Activated B cell treated with CpG ODN at 0.5 μM for 24 hours (primary cell): ENCODE measurements at regions of chr4 and their contacts with region 1.

Region 1: DNA sequence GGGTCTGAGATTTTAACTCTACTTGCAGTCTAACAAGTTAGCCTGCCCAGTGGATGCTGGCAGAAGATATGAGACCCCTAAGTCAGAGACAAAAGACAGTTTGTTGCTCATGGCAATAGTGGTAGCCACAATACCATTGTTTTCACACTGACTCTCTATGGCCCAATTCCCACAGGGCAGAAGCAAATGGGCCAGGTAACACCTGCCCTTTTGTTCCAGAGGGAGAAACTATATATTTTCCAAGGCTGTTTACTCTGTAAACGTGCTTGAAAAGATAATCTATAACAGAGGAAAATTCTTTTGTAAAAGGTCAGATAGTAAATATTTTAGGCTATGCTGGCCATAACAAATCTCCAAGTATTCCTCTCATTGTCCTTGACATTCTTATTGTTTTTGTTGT is 57.2 kb upstream of the NPNT start:
- DNase-seq: no peak
- ATAC-seq: no peak
- H3K4me3 Mint-ChIP-seq: no peak overlapping the region
- H3K27ac Mint-ChIP-seq: no peak overlapping the region
- H3K4me1 Mint-ChIP-seq: no peaks in the 10 kb centered on the region
- H3K27me3 Mint-ChIP-seq: no peaks in the 10 kb centered on the region
- CTCF ChIP-seq: no peak

Region 2: GRCh38 chr4:104930298-104930697 is 907.8 kb before region 1 on chr4:
- CTCF ChIA-PET with region 1: no interaction called
- POLR2A ChIA-PET with region 1: no interaction called
- intact Hi-C with region 1: loop called (anchors 10 kb)
- DNase-seq: no peak
- ATAC-seq: no peak
- H3K4me3 Mint-ChIP-seq: no peak overlapping the region
- H3K27ac Mint-ChIP-seq: peak overlapping the region; percentile 63
- H3K4me1 Mint-ChIP-seq: peaks cover 27% of the 10 kb centered on the region
- H3K27me3 Mint-ChIP-seq: no peaks in the 10 kb centered on the region
- CTCF ChIP-seq: no peak